Heart right ventricle (tissue), 16 donors: ENCODE measurements at regions of chr9 and their contacts with region 1.

Region 1: DNA sequence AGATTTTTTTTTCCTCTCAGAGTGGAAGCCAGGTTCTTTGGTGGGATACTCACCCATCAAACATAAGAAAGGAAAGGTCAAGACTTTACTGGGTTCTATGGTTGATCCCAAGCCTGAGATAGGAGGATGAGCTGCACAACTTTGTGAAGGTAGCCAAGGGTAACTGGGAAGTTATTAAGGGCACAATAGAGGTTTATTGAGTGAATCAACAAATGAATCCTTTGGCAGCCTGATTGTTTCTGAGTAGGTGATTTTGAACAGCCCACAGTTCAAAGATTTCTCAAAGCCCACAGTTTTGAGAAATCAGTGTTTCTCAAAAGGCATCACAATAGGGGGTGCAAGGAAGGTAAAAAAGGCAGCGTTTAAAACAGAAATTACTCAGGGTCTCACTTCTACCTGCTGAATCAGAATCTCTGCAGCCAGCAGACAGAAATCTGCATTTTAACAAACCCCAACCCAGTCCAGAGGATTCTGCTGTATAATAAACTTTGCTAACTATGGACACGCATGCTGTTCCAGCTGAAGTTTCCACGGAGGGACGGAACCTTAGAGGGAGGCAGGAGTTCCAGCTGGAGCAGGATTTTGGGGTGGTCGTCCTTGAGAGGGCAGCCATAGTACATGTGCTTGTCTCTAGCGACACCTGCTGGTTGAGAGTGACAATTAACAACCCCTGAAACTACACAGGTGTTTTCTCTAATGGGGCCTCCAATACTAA is 32.7 kb upstream of the FSD1L start:
- DNase-seq: peak in 1 of 2 donors; percentile 45
- ATAC-seq: peak; percentile 59 to 80 (median 71)
- H3K4me3 ChIP-seq: no peak overlapping the region
- H3K27ac ChIP-seq: no peak overlapping the region
- H3K4me1 ChIP-seq: peaks cover 0 to 11% (median 0%) of the 10 kb centered on the region in 9 donors
- H3K27me3 ChIP-seq: no peaks in the 10 kb centered on the region
- CTCF ChIP-seq: peak; percentile 70 to 92 (median 88)

Region 2: GRCh38 chr9:104856413-104856941 is 558.6 kb before region 1 on chr9:
- intact Hi-C with region 1: loop called in 6 of 10 experiments (anchors 5 to 10 kb)
- DNase-seq: no peak
- ATAC-seq: no peak
- H3K4me3 ChIP-seq: no peak overlapping the region
- H3K27ac ChIP-seq: no peak overlapping the region
- H3K4me1 ChIP-seq: peaks cover 0 to 47% (median 13%) of the 10 kb centered on the region in 9 donors
- H3K27me3 ChIP-seq: no peaks in the 10 kb centered on the region
- CTCF ChIP-seq: no peak

Region 3: DNA sequence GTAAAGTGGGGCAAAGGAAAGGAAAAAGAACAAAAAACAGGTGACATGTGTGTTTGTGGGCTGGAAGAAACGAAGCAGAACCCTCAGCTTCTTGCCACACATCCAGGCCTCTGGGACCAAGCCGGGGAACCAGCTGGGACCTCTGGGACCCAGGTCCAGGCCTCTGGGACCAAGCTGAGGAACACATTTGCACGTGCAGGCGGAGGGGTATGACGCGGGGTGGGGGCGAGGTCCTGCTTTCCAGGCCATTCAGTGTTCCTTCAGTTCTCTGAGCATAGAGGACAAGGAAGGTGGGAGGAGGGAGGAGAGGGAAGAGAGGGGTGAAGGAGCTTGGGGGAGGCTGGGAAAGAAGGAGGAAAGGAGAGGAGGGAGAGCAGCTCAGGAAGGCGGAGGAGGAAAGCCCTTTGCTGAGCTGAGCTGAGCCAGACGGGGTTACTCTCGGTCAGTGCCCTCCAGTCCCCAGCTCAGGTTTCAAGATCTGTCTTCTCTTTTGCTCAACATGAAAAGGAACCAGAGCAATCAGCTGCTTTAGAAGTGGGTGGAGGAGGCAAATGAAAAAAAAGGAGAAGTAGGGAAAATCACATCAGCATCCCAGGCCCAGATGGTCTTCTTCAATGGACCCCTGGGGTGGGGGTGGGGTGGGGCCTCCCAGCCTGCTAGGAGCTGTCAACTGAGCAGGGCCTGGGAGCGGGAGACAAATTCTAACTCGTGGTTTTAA is 546.3 kb before region 1 on chr9:
- intact Hi-C with region 1: loop called in 6 of 10 experiments (anchors 5 to 10 kb)
- DNase-seq: peak; percentile 52 to 69
- ATAC-seq: peak; percentile 88 to 92 (median 90)
- H3K4me3 ChIP-seq: no peak overlapping the region
- H3K27ac ChIP-seq: peak overlapping the region in 9 of 10 donors; percentile 30 to 82 (median 70)
- H3K4me1 ChIP-seq: peaks cover 22 to 84% (median 51%) of the 10 kb centered on the region in 9 donors
- H3K27me3 ChIP-seq: no peaks in the 10 kb centered on the region
- CTCF ChIP-seq: no peak

Region 4: DNA sequence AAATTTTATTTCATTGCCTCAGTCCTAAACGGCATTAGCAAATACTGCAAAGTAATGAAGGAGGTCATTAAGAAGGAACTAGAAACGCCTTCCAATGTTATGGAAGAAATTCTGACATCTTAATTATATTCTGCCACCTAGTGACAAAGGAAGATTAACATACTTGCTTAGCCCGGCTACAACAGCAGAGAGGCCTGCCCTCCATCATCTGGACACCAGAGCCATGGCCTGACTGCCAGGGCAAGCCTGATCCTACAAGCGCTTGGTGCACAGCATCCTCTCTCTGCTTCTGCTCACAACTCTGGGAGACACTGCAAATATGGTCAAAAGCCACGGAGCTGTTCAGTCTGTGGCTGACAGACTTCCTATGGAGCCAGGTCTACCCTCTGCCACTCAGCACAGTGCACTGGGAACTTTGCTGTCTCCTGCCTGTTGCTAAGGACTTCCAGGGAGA is 257.9 kb before region 1 on chr9:
- intact Hi-C with region 1: loop called in 9 of 10 experiments (anchors 2 to 5 kb)
- DNase-seq: peak; percentile 42 to 50
- ATAC-seq: peak; percentile 86 to 93 (median 88)
- H3K4me3 ChIP-seq: no peak overlapping the region
- H3K27ac ChIP-seq: peak overlapping the region in 2 of 10 donors; percentile 2 to 7
- H3K4me1 ChIP-seq: peaks cover 0 to 32% (median 4%) of the 10 kb centered on the region in 9 donors
- H3K27me3 ChIP-seq: no peaks in the 10 kb centered on the region
- CTCF ChIP-seq: peak in 8 of 9 donors; percentile 49 to 73 (median 64)

Region 5: GRCh38 chr9:105244003-105244733 is 170.9 kb before region 1 on chr9 and contains the start of gene SLC44A1:
- intact Hi-C with region 1: loop called in 1 of 10 experiments (anchors 10 kb)
- DNase-seq: peak; percentile 97 to 99
- ATAC-seq: peak; percentile 98 to 100 (median 98)
- H3K4me3 ChIP-seq: peak within 1 kb of the TSS; percentile 62 to 91 (median 84)
- H3K27ac ChIP-seq: peak within 1 kb of the TSS; percentile 73 to 89 (median 80)
- H3K4me1 ChIP-seq: peaks cover 0 to 61% (median 43%) of the 10 kb centered on the region in 9 donors
- H3K27me3 ChIP-seq: no peaks in the 10 kb centered on the region
- CTCF ChIP-seq: peak in 3 of 9 donors; percentile 9 to 29 (median 26)
- total RNA-seq, gene SLC44A1: 12.6 to 29.0 (median 19.0) TPM

Region 6: GRCh38 chr9:105318729-105319191 is 96.3 kb before region 1 on chr9:
- intact Hi-C with region 1: no loop called
- DNase-seq: no peak
- ATAC-seq: no peak
- H3K4me3 ChIP-seq: no peak overlapping the region
- H3K27ac ChIP-seq: no peak overlapping the region
- H3K4me1 ChIP-seq: no peaks in the 10 kb centered on the region
- H3K27me3 ChIP-seq: no peaks in the 10 kb centered on the region
- CTCF ChIP-seq: no peak